ENCODE measurements at regions of chr2 and their contacts with region 1.

Region 1: DNA sequence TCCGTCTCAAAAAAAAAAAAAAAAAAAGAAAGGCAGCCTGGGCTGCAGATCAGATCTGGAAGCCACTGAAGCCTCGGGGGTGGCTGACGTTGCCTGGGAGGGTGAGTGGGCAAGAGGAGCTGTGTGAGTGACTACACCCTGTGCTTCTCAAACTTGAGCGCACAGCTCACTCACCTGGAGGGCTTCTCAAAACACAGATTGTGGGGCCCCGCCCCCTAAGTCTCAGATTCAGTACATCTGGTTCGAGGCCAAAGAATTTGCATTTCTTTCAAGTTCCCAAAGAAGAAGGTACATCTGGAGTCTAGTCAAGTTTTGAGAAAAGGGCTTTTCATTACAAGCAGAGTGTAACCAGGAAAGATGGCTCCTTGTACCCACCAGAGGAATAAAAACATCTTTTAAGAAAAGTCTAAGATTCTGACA is 97.7 kb upstream of the CAB39 start:
- DNase-seq: peak; percentile 85
- ATAC-seq: peak; percentile 88
- H3K4me3 ChIP-seq: peak overlapping the region; percentile 53; the same call in 1 of the 2 replicates
- H3K27ac ChIP-seq: peak overlapping the region; percentile 60
- H3K4me1 ChIP-seq: peaks cover 22% of the 10 kb centered on the region
- H3K27me3 ChIP-seq: no peaks in the 10 kb centered on the region
- CTCF ChIP-seq: peak in 1 of 3 experiments; percentile 13; a peak in 1 of 6 replicates
- EP300 ChIP-seq: no peak
- POLR2A ChIP-seq: peak; percentile 45; the same call in 1 of the 2 replicates
- RAD21 ChIP-seq: peak; percentile 44; the same call in 1 of the 2 replicates

Region 2: DNA sequence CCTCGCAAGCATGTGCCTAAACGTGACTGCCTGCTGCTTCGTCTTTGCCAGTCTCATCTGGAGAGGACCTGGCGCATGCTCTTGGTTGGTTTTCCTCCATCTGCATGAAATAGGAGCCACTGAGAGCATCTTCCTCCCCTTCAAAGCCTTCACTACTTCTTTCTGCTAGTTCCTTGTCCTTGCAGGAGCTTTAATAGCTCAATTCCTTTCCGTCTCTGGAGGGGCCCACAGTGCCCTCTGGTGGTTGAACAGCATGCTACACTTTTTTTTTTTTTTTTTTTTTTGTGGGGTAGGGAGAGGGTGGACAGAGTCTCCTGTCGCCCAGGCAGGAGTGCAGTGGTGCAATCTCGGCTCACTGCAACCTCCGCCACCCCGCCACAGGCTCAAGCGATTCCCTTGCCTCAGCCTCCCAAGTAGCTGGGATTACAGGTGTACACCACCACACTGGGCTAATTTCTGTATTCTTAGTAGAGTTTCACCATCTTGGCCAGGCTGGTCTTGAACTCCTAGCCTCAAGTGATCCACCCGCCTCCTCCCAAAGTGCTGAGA is 454.7 kb before region 1 on chr2:
- CTCF ChIA-PET with region 1: interaction called, 6 read pairs
- POLR2A ChIA-PET with region 1: no interaction called
- RAD21 ChIA-PET with region 1: interaction called, 3 read pairs
- SMC1A ChIA-PET with region 1: interaction called, 8 read pairs
- in situ Hi-C with region 1: no loop called
- intact Hi-C with region 1: loop called (anchors 1 kb)
- DNase-seq: peak; percentile 9
- ATAC-seq: peak; percentile 81
- H3K4me3 ChIP-seq: no peak overlapping the region
- H3K27ac ChIP-seq: no peak overlapping the region
- H3K4me1 ChIP-seq: no peaks in the 10 kb centered on the region
- H3K27me3 ChIP-seq: no peaks in the 10 kb centered on the region
- CTCF ChIP-seq: peak; percentile 63 to 70 (median 65)
- EP300 ChIP-seq: no peak
- POLR2A ChIP-seq: no peak
- RAD21 ChIP-seq: peak; percentile 86

Region 3: DNA sequence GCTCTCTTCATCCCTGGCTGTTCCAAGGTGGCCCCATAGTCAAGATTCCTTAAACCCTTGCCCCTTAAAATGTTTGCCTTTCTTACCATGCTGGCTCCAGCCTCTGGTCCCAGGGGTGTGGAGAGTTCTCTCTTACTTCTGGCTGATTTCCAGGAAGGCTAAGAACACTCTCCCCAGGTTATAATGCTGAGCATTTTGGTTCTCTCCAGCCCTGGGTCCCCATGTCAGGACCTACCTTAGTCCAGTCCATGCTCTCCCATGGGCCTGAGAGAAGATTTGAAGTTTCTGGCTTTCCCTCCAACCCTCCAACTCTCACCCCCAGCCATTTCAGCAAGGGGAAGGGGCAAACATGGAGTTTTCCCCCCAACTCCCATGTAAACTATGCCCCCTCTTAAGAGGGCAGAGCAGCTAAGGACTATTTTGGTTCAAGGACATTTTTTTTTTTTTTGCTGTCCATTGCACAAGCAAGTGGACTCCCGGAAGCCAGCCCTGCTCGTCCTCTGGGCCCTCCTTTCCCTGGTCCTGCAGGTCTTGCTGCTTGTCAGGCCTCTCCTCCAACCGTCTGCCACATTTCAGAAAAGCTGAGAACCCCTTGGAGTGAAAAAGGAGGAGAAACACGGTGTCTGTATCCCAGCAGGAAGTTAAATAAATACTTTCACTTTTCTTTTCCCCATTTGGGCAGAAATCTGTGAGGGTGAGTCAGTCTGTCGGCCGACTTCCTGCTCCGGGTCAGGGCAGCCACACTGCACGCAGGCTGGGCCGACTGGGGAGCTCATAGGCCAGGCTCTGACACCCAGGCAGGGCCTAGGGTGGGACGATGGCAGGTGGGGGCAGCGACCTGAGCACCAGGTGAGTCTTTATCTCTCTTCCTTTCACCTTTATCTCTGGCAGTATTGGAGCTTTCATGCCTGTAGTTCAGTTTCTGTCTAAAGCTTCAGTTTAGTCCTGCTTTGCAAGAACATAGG is 288.2 kb before region 1 on chr2 and contains the start of gene SP140L:
- CTCF ChIA-PET with region 1: interaction called, 3 read pairs
- POLR2A ChIA-PET with region 1: no interaction called
- RAD21 ChIA-PET with region 1: interaction called, 5 read pairs
- SMC1A ChIA-PET with region 1: interaction called, 3 read pairs
- in situ Hi-C with region 1: no loop called
- intact Hi-C with region 1: loop called (anchors 5 kb)
- DNase-seq: peak; percentile 55
- ATAC-seq: peak; percentile 96
- H3K4me3 ChIP-seq: peak within 1 kb of the TSS; percentile 78
- H3K27ac ChIP-seq: peak within 1 kb of the TSS; percentile 96
- H3K4me1 ChIP-seq: no peaks in the 10 kb centered on the region
- H3K27me3 ChIP-seq: no peaks in the 10 kb centered on the region
- CTCF ChIP-seq: no peak
- EP300 ChIP-seq: no peak
- POLR2A ChIP-seq: peak; percentile 81
- RAD21 ChIP-seq: no peak
- polyA plus RNA-seq, gene SP140L: 4.7 to 6.1 TPM

Region 4: GRCh38 chr2:230582851-230583283 is 32.1 kb before region 1 on chr2:
- CTCF ChIA-PET with region 1: no interaction called
- POLR2A ChIA-PET with region 1: interaction called, 3 read pairs
- RAD21 ChIA-PET with region 1: interaction called, 4 read pairs
- SMC1A ChIA-PET with region 1: interaction called, 17 read pairs
- in situ Hi-C with region 1: no loop called
- intact Hi-C with region 1: no loop called
- DNase-seq: peak; percentile 88
- ATAC-seq: peak; percentile 76
- H3K4me3 ChIP-seq: peak overlapping the region; percentile 44; the same call in 1 of the 2 replicates
- H3K27ac ChIP-seq: peak overlapping the region; percentile 97
- H3K4me1 ChIP-seq: peaks cover 57% of the 10 kb centered on the region
- H3K27me3 ChIP-seq: no peaks in the 10 kb centered on the region
- CTCF ChIP-seq: no peak
- EP300 ChIP-seq: peak; percentile 76 to 77; a peak in 3 of 4 replicates
- POLR2A ChIP-seq: no peak
- RAD21 ChIP-seq: no peak

Region 5: GRCh38 chr2:230636684-230637271 is 21.9 kb after region 1 on chr2:
- CTCF ChIA-PET with region 1: interaction called, 6 read pairs
- POLR2A ChIA-PET with region 1: interaction called, 11 read pairs
- RAD21 ChIA-PET with region 1: interaction called, 24 read pairs
- SMC1A ChIA-PET with region 1: interaction called, 26 read pairs
- in situ Hi-C with region 1: no loop called
- intact Hi-C with region 1: no loop called
- DNase-seq: no peak
- ATAC-seq: peak; percentile 70
- H3K4me3 ChIP-seq: no peak overlapping the region
- H3K27ac ChIP-seq: peak overlapping the region; percentile 54
- H3K4me1 ChIP-seq: peaks cover 14% of the 10 kb centered on the region
- H3K27me3 ChIP-seq: no peaks in the 10 kb centered on the region
- CTCF ChIP-seq: no peak
- EP300 ChIP-seq: peak in 1 of 2 experiments; percentile 73; a peak in 2 of 4 replicates
- POLR2A ChIP-seq: no peak
- RAD21 ChIP-seq: no peak

Region 6: GRCh38 chr2:230668184-230668938 is 53.4 kb after region 1 on chr2:
- CTCF ChIA-PET with region 1: interaction called, 4 read pairs
- POLR2A ChIA-PET with region 1: interaction called, 27 read pairs
- RAD21 ChIA-PET with region 1: interaction called, 30 read pairs
- SMC1A ChIA-PET with region 1: interaction called, 19 read pairs
- in situ Hi-C with region 1: no loop called
- intact Hi-C with region 1: no loop called
- DNase-seq: peak; percentile 88
- ATAC-seq: peak; percentile 70
- H3K4me3 ChIP-seq: no peak overlapping the region
- H3K27ac ChIP-seq: peak overlapping the region; percentile 92
- H3K4me1 ChIP-seq: peaks cover 73% of the 10 kb centered on the region
- H3K27me3 ChIP-seq: no peaks in the 10 kb centered on the region
- CTCF ChIP-seq: no peak
- EP300 ChIP-seq: peak; percentile 90 to 92
- POLR2A ChIP-seq: peak; percentile 41
- RAD21 ChIP-seq: peak; percentile 10; the same call in 1 of the 2 replicates

Region 7: DNA sequence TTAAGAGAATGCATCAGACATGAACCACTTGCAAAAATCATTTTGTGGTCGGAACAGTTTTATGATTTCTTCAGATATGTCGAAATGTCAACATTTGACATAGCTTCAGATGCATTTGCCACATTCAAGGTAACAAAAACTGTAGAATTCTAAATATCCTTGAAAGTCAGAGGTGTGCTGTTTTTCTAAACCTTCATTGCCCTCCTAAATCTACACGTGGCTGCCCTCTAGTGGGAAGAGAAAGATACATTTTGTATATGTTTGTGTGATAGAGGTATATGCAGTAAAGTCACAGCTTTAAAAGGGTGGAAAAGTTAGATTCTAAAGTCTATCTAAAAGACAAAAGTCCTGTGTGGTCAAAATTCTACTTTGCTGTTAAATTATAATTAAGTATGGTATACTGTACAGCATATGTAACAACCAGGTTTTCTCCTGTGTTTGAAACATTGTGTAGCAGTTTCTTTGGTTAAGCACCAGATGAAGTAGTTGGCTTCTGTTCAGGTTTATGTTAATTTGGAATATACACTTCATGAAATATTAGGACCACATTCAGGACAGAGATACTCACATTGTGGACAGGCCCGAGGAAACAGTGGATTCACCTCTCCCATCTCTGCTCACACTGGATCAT is 184.0 kb after region 1 on chr2:
- CTCF ChIA-PET with region 1: interaction called, 56 read pairs
- POLR2A ChIA-PET with region 1: interaction called, 3 read pairs
- RAD21 ChIA-PET with region 1: interaction called, 49 read pairs
- SMC1A ChIA-PET with region 1: interaction called, 40 read pairs
- in situ Hi-C with region 1: no loop called
- intact Hi-C with region 1: loop called (anchors 2 kb)
- DNase-seq: no peak
- ATAC-seq: peak; percentile 94
- H3K4me3 ChIP-seq: no peak overlapping the region
- H3K27ac ChIP-seq: no peak overlapping the region
- H3K4me1 ChIP-seq: peaks cover 14% of the 10 kb centered on the region
- H3K27me3 ChIP-seq: no peaks in the 10 kb centered on the region
- CTCF ChIP-seq: peak; percentile 57 to 71 (median 68)
- EP300 ChIP-seq: no peak
- POLR2A ChIP-seq: no peak
- RAD21 ChIP-seq: peak; percentile 96

Region 8: DNA sequence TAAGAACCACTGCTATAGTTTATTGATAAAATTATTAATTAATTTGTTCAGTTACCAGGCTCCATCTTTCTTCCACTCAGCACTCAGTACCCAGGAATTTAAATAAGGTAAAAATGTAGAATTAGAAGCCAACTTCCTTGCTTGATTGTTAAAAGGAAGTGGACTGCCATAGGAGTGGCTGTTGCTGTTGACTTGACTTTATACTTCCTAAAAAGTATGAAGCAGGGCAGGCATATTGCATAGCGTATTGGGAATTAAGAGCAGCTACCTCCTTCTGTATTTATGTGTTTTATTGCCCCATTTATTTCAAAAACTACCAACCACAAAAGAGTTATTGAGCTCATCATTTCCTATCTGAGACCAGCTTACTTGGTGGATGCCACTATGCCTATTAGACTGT is 469.6 kb after region 1 on chr2:
- CTCF ChIA-PET with region 1: no interaction called
- POLR2A ChIA-PET with region 1: no interaction called
- RAD21 ChIA-PET with region 1: no interaction called
- SMC1A ChIA-PET with region 1: no interaction called
- in situ Hi-C with region 1: no loop called
- intact Hi-C with region 1: no loop called
- DNase-seq: no peak
- ATAC-seq: no peak
- H3K4me3 ChIP-seq: no peak overlapping the region
- H3K27ac ChIP-seq: no peak overlapping the region
- H3K4me1 ChIP-seq: no peaks in the 10 kb centered on the region
- H3K27me3 ChIP-seq: no peaks in the 10 kb centered on the region
- CTCF ChIP-seq: no peak
- EP300 ChIP-seq: no peak
- POLR2A ChIP-seq: no peak
- RAD21 ChIP-seq: no peak

Measured in GM12878 (cell line).